ENCODE measurements at regions of chr7 and their contacts with region 1.

Region 1: GRCh38 chr7:85041605-85042216 is 145.1 kb downstream of the SEMA3D start:
- DNase-seq: peak; percentile 23 to 67 (median 26)
- ATAC-seq: peak; percentile 88
- H3K4me3 ChIP-seq: no peak overlapping the region
- H3K27ac ChIP-seq: no peak overlapping the region
- H3K4me1 ChIP-seq: no peaks in the 10 kb centered on the region
- H3K27me3 ChIP-seq: no peaks in the 10 kb centered on the region
- CTCF ChIP-seq: peak; percentile 47 to 66 (median 65); a peak in 5 of 6 replicates
- EP300 ChIP-seq: no peak
- POLR2A ChIP-seq: no peak
- RAD21 ChIP-seq: peak; percentile 70 to 84

Region 2: DNA sequence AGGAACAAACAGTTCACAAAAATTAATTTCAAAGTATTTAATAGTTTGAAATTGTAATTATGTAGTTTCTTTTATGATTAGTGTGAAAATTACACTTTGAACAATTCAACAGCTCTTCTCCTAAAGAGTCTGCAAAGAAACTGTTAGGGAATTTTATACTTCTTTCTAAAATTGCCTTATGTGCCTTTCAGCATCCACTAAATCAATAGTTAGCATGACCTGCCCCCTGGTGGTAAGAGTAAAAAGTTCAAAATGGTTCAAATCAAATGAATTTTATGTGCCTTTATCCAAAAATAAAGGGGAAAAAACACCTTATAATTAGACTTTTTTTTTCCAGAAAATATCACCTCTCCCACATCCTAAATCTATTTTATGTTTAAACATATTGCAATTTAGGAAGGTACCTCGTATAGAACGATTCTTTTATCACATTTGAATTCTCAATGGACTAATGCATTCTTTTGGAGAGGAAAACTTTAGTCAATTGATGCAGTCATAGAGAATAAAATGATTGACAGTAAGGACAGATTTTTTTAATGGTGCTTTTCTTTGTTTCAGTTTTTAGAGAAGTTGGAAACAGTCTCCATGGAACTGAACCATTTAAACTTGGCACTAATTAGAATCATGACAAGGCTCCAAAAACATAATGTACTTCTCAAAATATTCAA is 18.5 kb before region 1 on chr7:
- CTCF ChIA-PET with region 1: no interaction called
- POLR2A ChIA-PET with region 1: no interaction called
- in situ Hi-C with region 1: no loop called
- intact Hi-C with region 1: no loop called
- DNase-seq: peak; percentile 31 to 61 (median 38)
- ATAC-seq: no peak; the same call in 2 of the 3 replicates
- H3K4me3 ChIP-seq: no peak overlapping the region
- H3K27ac ChIP-seq: no peak overlapping the region
- H3K4me1 ChIP-seq: no peaks in the 10 kb centered on the region
- H3K27me3 ChIP-seq: no peaks in the 10 kb centered on the region
- CTCF ChIP-seq: peak; percentile 37 to 80 (median 57); a peak in 4 of 6 replicates
- EP300 ChIP-seq: no peak
- POLR2A ChIP-seq: no peak
- RAD21 ChIP-seq: peak; percentile 95 to 96

Region 3: DNA sequence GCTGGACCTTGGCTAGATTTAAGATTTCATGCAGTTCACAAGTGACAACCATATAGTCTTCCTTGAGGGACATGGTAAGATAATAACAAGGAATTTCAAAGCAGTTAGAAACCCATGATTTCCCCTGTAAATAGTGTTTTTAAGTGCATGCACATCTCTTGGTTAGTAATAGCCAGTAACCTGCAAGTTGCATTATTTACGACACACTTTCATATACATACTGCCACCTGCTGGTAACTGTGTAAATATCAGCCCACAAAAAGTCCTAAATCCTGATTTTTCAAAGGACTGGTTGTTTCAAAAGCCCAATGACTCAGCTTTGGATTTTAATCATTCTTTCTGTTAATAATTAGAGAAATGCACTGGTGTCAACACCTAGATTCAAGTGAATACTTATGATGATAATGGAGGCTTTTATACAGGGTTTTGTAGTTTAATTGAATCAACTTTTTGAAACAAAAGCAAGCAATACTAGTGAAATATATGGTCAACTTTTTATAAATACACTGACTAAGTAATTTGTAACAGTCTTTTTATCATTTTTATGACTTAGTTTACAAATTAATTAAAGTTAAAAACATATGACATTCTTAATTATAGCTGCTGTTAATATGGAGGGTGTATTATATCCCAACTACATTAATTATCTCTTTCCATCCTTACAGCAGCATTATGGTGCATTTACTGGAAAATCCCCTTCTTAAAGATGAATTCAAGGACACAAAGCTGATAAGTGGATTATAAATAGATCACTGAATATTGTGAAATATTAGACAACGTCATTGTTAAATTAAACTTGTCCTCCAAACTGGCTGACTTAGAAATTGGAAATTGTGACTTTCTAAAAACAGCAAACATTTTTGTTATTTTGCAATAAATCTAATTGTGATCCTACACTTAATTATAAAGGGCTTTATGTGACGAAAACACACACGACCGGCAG is 512.8 kb after region 1 on chr7:
- CTCF ChIA-PET with region 1: interaction called, 5 read pairs
- POLR2A ChIA-PET with region 1: no interaction called
- in situ Hi-C with region 1: loop called (anchors 10 kb)
- intact Hi-C with region 1: loop called (anchors 1 kb)
- DNase-seq: peak; percentile 16 to 44 (median 38)
- ATAC-seq: peak; percentile 45; the same call in 2 of the 3 replicates
- H3K4me3 ChIP-seq: no peak overlapping the region
- H3K27ac ChIP-seq: no peak overlapping the region
- H3K4me1 ChIP-seq: no peaks in the 10 kb centered on the region
- H3K27me3 ChIP-seq: no peaks in the 10 kb centered on the region
- CTCF ChIP-seq: peak; percentile 30 to 67 (median 67); a peak in 5 of 6 replicates
- EP300 ChIP-seq: no peak
- POLR2A ChIP-seq: no peak
- RAD21 ChIP-seq: peak; percentile 56 to 72

Region 4: DNA sequence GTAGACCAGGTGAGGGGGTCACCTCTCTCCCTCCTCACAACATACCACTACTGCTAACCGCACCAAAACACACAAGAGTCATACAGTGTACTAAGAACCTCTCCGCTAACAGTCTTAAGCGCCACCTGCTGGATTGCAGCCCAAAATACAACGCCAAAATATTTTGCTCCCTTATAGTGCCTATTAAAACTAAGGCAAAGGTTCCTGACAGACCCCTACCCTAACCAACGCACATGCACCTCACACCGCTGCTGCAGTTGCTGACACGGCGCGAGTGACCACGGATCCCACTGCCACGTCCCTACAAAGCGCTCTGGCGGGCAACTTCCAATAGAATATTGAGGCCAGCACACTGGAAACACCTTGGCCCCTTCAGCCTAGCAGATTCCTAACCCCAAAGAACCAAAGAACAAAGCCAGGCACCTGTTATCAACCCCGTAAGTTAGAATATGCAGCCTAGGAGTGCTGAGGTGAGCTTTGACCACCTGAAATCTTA is 708.8 kb after region 1 on chr7:
- CTCF ChIA-PET with region 1: no interaction called
- POLR2A ChIA-PET with region 1: no interaction called
- in situ Hi-C with region 1: no loop called
- intact Hi-C with region 1: loop called (anchors 2 kb)
- DNase-seq: peak in 2 of 4 experiments; percentile 9 to 15
- ATAC-seq: peak; percentile 76
- H3K4me3 ChIP-seq: no peak overlapping the region
- H3K27ac ChIP-seq: no peak overlapping the region
- H3K4me1 ChIP-seq: no peaks in the 10 kb centered on the region
- H3K27me3 ChIP-seq: no peaks in the 10 kb centered on the region
- CTCF ChIP-seq: peak; percentile 36 to 63 (median 52)
- EP300 ChIP-seq: no peak
- POLR2A ChIP-seq: no peak
- RAD21 ChIP-seq: peak; percentile 27 to 59; a peak in 3 of 4 replicates

Region 5: GRCh38 chr7:86469680-86470295 is 1428.1 kb after region 1 on chr7:
- CTCF ChIA-PET with region 1: interaction called, 4 read pairs
- POLR2A ChIA-PET with region 1: no interaction called
- in situ Hi-C with region 1: loop called (anchors 25 kb)
- intact Hi-C with region 1: no loop called
- DNase-seq: peak; percentile 50 to 77 (median 58)
- ATAC-seq: peak; percentile 91
- H3K4me3 ChIP-seq: no peak overlapping the region
- H3K27ac ChIP-seq: no peak overlapping the region
- H3K4me1 ChIP-seq: no peaks in the 10 kb centered on the region
- H3K27me3 ChIP-seq: no peaks in the 10 kb centered on the region
- CTCF ChIP-seq: peak; percentile 56 to 81 (median 71)
- EP300 ChIP-seq: no peak
- POLR2A ChIP-seq: no peak
- RAD21 ChIP-seq: peak; percentile 83 to 85